Dendritic cell treated with granulocyte-macrophage colony-stimulating factor and Interleukin-4, amounts not matched to agents 40 ng/mL and 50 ng/mL, for 4 days (primary cell): ENCODE measurements at regions of chr10 and their contacts with region 1.

Region 1: GRCh38 chr10:11472158-11472753 is 139.2 kb downstream of the USP6NL start:
- H3K4me3 Mint-ChIP-seq: no peak overlapping the region
- H3K27ac Mint-ChIP-seq: no peak overlapping the region
- H3K4me1 Mint-ChIP-seq: no peaks in the 10 kb centered on the region
- H3K27me3 Mint-ChIP-seq: no peaks in the 10 kb centered on the region

Region 2: GRCh38 chr10:11335167-11335652 is 137.0 kb before region 1 on chr10:
- intact Hi-C with region 1: loop called (anchors 10 kb)
- H3K4me3 Mint-ChIP-seq: no peak overlapping the region
- H3K27ac Mint-ChIP-seq: peak overlapping the region; percentile 18
- H3K4me1 Mint-ChIP-seq: peaks cover 22% of the 10 kb centered on the region
- H3K27me3 Mint-ChIP-seq: no peaks in the 10 kb centered on the region

Region 3: DNA sequence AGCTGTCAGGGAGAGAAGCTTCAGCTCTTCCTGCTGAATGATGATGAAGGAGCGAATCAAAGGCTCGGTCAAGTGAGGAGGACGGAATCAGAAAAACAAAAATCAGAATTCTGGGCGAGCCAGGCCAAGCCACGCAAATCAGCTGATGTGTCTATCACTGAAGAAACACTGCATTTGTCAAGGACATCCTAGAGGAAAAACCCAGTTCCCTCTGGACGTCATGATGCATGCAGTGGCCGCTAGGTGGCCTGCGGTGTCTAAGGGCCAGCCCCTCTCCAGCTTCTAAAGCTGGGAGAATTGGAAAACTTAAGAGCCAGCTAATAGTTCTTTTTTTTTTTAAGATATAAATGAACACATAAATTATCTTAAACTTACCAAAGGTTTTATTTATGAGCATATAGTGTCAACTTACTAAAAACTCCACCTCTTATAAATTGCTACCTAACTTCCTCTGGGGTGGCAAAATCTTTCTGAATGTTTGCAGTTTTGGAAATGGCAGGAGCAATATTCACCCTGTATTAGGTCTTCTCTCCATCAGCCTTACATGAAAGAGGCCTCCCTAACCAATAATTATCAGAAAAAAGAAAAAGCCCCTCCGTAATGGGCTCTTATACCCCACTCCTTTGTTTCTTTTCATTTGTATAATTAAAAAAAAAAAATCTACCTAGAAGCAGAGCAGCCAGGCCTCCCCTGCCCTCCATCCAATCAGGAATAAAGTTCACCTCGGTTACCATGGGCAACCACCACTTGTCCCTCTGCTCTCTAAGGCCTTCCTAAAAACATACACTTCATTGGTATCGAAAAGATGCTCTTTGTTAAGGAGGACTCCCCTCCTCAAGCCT is 47.6 kb before region 1 on chr10:
- intact Hi-C with region 1: loop called (anchors 5 kb)
- H3K4me3 Mint-ChIP-seq: no peak overlapping the region
- H3K27ac Mint-ChIP-seq: no peak overlapping the region
- H3K4me1 Mint-ChIP-seq: no peaks in the 10 kb centered on the region
- H3K27me3 Mint-ChIP-seq: no peaks in the 10 kb centered on the region